ENCODE measurements at regions of chr2 and their contacts with region 1.

Region 1: GRCh38 chr2:219029829-219030165 is 11.5 kb downstream of the CFAP65 start:
- DNase-seq: peak; percentile 54 to 95
- H3K4me3 ChIP-seq: no peak overlapping the region
- H3K27ac ChIP-seq: no peak overlapping the region
- H3K4me1 ChIP-seq: peaks cover 0 to 3% (median under 1%) of the 10 kb centered on the region in 4 experiments; a peak in 2 of 7 replicates
- H3K27me3 ChIP-seq: no peaks in the 10 kb centered on the region; a peak in 1 of 7 replicates
- CTCF ChIP-seq: peak; percentile 94 to 98 (median 97)
- EP300 ChIP-seq: no peak
- POLR2A ChIP-seq: no peak
- RAD21 ChIP-seq: peak; percentile 90 to 92

Region 2: DNA sequence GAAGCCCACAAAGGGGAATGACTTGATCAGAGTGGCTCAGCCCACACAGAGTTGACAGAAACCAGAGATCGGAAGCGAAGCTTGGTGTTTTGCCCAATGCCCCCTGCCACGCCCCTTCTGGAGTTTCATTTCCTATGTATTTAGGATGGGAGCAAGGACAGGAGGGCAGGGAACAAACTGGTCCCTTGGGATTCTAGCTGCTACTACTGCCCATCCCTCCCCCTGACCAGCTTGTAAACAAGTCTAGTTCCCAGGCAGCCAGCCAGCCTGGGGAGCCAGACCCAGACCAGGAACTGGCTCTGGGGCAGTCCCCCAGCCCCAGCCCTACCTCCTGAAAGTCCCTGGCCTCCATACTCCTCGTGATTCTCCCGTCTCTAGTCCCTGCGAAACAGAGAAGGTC is 161.9 kb before region 1 on chr2:
- CTCF ChIA-PET with region 1: no interaction called
- POLR2A ChIA-PET with region 1: no interaction called
- DNase-seq: no peak
- H3K4me3 ChIP-seq: no peak overlapping the region
- H3K27ac ChIP-seq: no peak overlapping the region
- H3K4me1 ChIP-seq: peaks cover 0 to 16% (median 5%) of the 10 kb centered on the region in 4 experiments; a peak in 6 of 7 replicates
- H3K27me3 ChIP-seq: peaks cover 70 to 95% (median 88%) of the 10 kb centered on the region in 4 experiments
- CTCF ChIP-seq: no peak
- EP300 ChIP-seq: no peak
- POLR2A ChIP-seq: no peak
- RAD21 ChIP-seq: no peak

Region 3: DNA sequence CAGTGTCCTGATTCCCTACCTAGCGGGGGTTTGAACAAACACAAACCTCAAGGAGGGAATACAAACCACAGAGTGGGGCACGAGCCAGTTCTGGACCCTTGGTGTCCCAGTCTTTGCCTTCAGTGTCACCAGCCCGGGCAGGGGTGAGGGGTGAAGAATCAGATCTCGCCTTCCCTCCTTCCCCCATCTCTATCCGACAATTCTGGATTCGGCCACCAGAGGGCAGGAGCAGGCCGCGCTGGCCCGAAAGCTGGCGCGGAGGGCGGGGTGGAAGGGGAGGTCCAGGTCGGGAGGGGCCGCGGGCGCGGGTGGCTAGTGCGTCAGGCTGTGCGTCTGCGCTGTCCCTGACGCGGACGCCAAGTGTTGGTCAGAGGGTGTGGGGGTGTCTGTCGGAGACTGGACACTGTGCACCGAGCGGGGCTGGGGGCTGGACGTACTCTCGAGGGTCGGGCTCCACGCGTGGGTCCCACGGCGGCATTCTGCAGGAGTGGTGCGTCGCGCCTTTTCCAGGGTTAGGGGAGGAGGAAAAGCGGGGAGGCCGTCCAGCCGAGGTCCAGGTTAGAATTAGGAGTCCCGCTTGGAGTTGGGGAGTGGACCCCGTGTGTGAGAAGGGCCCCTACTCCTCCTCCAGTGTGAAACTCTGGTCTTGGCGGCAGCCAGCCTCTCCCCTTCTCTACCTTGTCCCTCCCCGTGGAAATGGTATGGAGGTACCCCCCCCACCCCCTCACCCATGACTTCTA is 33.7 kb before region 1 on chr2:
- CTCF ChIA-PET with region 1: interaction called, 150 read pairs
- POLR2A ChIA-PET with region 1: no interaction called
- DNase-seq: peak in 1 of 2 experiments; percentile 99
- H3K4me3 ChIP-seq: peak overlapping the region in 3 of 4 experiments; percentile 27 to 49 (median 34); a peak in 4 of 8 replicates
- H3K27ac ChIP-seq: no peak overlapping the region
- H3K4me1 ChIP-seq: peaks cover 0 to 43% (median 26%) of the 10 kb centered on the region in 4 experiments; a peak in 6 of 7 replicates
- H3K27me3 ChIP-seq: peaks cover 98 to 100% (median 99%) of the 10 kb centered on the region in 4 experiments
- CTCF ChIP-seq: peak in 2 of 3 experiments; percentile 88; a peak in 3 of 4 replicates
- EP300 ChIP-seq: 0 out of 3 replicates have a peak, but pooled peaks of 1 of the 2 experiments have one; percentile 20
- POLR2A ChIP-seq: no peak
- RAD21 ChIP-seq: peak; percentile 79 to 89

Region 4: GRCh38 chr2:219087361-219087760 is 57.6 kb after region 1 on chr2:
- CTCF ChIA-PET with region 1: interaction called, 13 read pairs
- POLR2A ChIA-PET with region 1: no interaction called
- DNase-seq: no peak
- H3K4me3 ChIP-seq: no peak overlapping the region
- H3K27ac ChIP-seq: no peak overlapping the region
- H3K4me1 ChIP-seq: no peaks in the 10 kb centered on the region
- H3K27me3 ChIP-seq: no peaks in the 10 kb centered on the region
- CTCF ChIP-seq: no peak
- EP300 ChIP-seq: no peak
- POLR2A ChIP-seq: no peak
- RAD21 ChIP-seq: no peak

Region 5: DNA sequence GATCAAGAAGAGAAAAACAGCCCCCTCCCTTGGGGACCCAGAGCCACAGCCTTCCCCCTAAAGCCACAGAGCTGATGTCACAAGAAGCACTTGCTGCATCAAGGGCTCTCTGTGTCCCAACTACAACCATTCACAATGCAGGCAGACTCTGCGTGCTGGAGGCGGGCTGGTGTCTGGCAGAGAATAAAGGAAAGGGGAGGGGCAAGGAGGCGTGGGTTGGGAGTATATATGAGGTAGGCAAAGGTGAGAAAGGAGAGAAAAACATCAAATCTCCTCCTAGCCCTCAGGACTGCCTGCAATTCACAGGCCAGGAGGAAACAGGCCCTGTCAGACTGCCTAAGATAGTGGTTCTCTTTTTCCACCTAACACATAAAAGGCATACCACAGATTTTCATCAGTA is 79.7 kb after region 1 on chr2:
- CTCF ChIA-PET with region 1: interaction called, 1,777 read pairs
- POLR2A ChIA-PET with region 1: no interaction called
- DNase-seq: peak; percentile 27 to 54
- H3K4me3 ChIP-seq: no peak overlapping the region
- H3K27ac ChIP-seq: no peak overlapping the region
- H3K4me1 ChIP-seq: no peaks in the 10 kb centered on the region; a peak in 1 of 7 replicates
- H3K27me3 ChIP-seq: no peaks in the 10 kb centered on the region
- CTCF ChIP-seq: no peak
- EP300 ChIP-seq: no peak
- POLR2A ChIP-seq: no peak
- RAD21 ChIP-seq: no peak

Region 6: GRCh38 chr2:219160186-219161017 is 130.6 kb after region 1 on chr2 and contains the start of gene NHEJ1:
- CTCF ChIA-PET with region 1: interaction called, 149 read pairs
- POLR2A ChIA-PET with region 1: no interaction called
- DNase-seq: peak in 1 of 2 experiments; percentile 100
- H3K4me3 ChIP-seq: peak within 1 kb of the TSS; percentile 78 to 83 (median 81)
- H3K27ac ChIP-seq: 0 out of 2 replicates have a peak within 1 kb of the TSS, but pooled peaks have one; percentile 69
- H3K4me1 ChIP-seq: peaks cover 0 to 5% (median 2%) of the 10 kb centered on the region in 4 experiments; a peak in 3 of 7 replicates
- H3K27me3 ChIP-seq: no peaks in the 10 kb centered on the region; a peak in 2 of 7 replicates
- CTCF ChIP-seq: peak; percentile 86 to 90 (median 89)
- EP300 ChIP-seq: no peak
- POLR2A ChIP-seq: peak in 1 of 2 experiments; percentile 75; a peak in 2 of 3 replicates
- RAD21 ChIP-seq: peak; percentile 78 to 82
- total RNA-seq, gene NHEJ1: 22.7 and 25.7 TPM in 2 replicates

Measured in H1 (cell line).